Caki2 (cell line): ENCODE measurements at regions of chr13 and their contacts with region 1.

Region 1: GRCh38 chr13:20258208-20258962 is 26.3 kb upstream of the GJB6 start:
- DNase-seq: peak; percentile 10

Region 2: GRCh38 chr13:20157151-20157796 is 101.1 kb before region 1 on chr13:
- in situ Hi-C with region 1: no loop called
- DNase-seq: no peak

Region 3: DNA sequence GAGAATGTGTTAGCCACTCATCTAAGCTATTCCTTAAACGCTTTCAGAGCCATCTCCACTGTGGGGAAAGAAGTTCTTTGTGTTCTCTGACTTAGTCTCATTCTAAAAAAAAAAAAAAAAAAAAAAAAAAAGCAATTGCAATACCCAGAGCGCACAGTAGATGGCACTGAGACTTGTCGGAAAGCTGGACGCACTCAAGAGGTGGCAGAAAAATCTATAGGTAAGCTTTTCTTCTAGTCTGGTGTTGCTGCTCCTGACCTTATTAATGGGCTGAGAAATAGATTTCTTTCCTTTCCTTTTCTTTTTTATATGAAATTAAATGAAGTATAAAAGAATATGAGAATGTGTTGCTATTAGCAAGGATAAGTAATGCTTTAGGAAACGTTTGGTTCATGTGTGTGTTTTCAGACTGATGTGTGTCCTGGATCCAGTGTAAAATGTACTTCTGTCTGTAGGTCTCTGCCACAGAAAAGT is 61.0 kb before region 1 on chr13:
- in situ Hi-C with region 1: loop called (anchors 10 kb)
- DNase-seq: peak; percentile 66